ENCODE measurements at regions of chr17 and their contacts with region 1.

Region 1: GRCh38 chr17:46193626-46194392 is 580 bp upstream of the KANSL1 start:
- DNase-seq: peak; percentile 97 to 100
- ATAC-seq: peak; percentile 84 to 97
- H3K4me3 ChIP-seq: peak overlapping the region; percentile 65
- H3K27ac ChIP-seq: peak overlapping the region; percentile 90 to 97
- H3K4me1 ChIP-seq: peaks cover 49% of the 10 kb centered on the region
- CTCF ChIP-seq: peak; percentile 80
- EP300 ChIP-seq: no peak
- POLR2A ChIP-seq: peak; percentile 88
- RAD21 ChIP-seq: peak in 1 of 2 experiments; percentile 20; a peak in 2 of 5 replicates

Region 2: GRCh38 chr17:45907750-45908395 is 285.9 kb before region 1 on chr17:
- CTCF ChIA-PET with region 1: no interaction called
- POLR2A ChIA-PET with region 1: no interaction called
- DNase-seq: no peak
- ATAC-seq: no peak
- H3K4me3 ChIP-seq: no peak overlapping the region
- H3K27ac ChIP-seq: no peak overlapping the region
- H3K4me1 ChIP-seq: 0 out of 3 replicates have a peak, but pooled peaks cover 4% of the 10 kb centered on the region
- CTCF ChIP-seq: no peak
- EP300 ChIP-seq: no peak
- POLR2A ChIP-seq: no peak
- RAD21 ChIP-seq: no peak

Region 3: GRCh38 chr17:45934044-45934979 is 259.5 kb before region 1 on chr17:
- CTCF ChIA-PET with region 1: no interaction called
- POLR2A ChIA-PET with region 1: no interaction called
- DNase-seq: no peak
- ATAC-seq: no peak; a peak in 1 of 6 replicates
- H3K4me3 ChIP-seq: no peak overlapping the region
- H3K27ac ChIP-seq: no peak overlapping the region
- H3K4me1 ChIP-seq: peaks cover 9% of the 10 kb centered on the region; the same call in 1 of the 3 replicates
- CTCF ChIP-seq: no peak
- EP300 ChIP-seq: no peak
- POLR2A ChIP-seq: no peak
- RAD21 ChIP-seq: no peak

Region 4: DNA sequence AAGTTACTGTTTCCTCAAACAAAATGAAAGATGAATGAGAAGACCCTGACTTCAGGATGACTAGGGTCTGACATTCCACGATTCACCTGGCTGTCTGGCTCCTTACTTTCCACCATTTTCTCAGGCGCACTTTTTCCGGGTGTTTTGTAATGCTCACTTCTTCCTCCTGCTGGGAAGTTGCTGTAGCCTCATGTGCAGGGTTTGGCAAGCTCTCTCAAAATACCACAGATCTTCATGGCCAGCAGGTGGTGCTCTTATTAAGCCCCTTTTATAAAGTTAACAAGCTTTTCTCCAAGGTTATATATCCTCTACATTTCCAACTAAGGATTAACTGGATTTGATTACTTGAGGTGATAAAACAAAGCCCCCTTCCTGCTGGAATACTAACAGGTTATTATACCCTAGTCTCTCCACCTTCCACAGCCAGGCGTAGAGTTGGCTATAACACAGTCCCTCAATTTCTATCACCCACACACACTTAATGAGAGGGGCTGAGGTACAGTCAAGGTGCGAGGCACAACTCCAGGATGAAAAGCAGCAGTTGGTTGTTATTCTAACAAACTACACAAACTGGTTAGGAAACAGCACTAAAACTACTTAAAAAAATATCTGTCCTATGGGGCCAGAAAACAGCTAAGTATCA is 149.4 kb before region 1 on chr17:
- CTCF ChIA-PET with region 1: interaction called, 83 read pairs
- POLR2A ChIA-PET with region 1: interaction called, 23 read pairs
- DNase-seq: peak; percentile 81 to 93
- ATAC-seq: peak; percentile 91 to 96
- H3K4me3 ChIP-seq: no peak overlapping the region
- H3K27ac ChIP-seq: peak overlapping the region; percentile 7 to 45; a peak in 3 of 6 replicates
- H3K4me1 ChIP-seq: peaks cover 23% of the 10 kb centered on the region
- CTCF ChIP-seq: peak; percentile 99
- EP300 ChIP-seq: no peak
- POLR2A ChIP-seq: no peak
- RAD21 ChIP-seq: peak; percentile 89 to 91

Region 5: DNA sequence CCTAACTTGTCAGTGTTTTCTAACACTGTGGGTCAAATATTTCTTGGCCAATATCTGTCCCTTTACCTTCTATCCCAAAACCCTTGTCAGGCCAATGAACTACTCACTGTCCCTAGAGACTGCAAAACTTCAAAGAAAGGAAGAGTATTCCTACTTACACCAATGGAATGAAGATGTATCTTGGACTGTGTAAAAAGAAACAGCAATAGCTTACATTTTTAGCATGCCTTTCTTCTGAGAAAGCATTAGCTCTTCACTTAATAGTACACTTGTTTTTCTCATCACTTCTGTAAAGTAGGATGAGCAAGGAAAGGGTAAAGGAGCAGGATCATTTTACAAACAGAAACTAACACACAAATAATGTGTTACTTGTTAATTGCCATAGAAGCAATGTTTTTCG is 120.8 kb before region 1 on chr17:
- CTCF ChIA-PET with region 1: interaction called, 21 read pairs
- POLR2A ChIA-PET with region 1: interaction called, 5 read pairs
- DNase-seq: peak; percentile 23 to 46
- ATAC-seq: peak; percentile 74 to 86; a peak in 5 of 6 replicates
- H3K4me3 ChIP-seq: no peak overlapping the region; the same call in 2 of the 3 replicates
- H3K27ac ChIP-seq: peak overlapping the region; percentile 44 to 59; a peak in 2 of 6 replicates
- H3K4me1 ChIP-seq: peaks cover 49% of the 10 kb centered on the region
- CTCF ChIP-seq: no peak
- EP300 ChIP-seq: no peak
- POLR2A ChIP-seq: no peak
- RAD21 ChIP-seq: no peak

Region 6: DNA sequence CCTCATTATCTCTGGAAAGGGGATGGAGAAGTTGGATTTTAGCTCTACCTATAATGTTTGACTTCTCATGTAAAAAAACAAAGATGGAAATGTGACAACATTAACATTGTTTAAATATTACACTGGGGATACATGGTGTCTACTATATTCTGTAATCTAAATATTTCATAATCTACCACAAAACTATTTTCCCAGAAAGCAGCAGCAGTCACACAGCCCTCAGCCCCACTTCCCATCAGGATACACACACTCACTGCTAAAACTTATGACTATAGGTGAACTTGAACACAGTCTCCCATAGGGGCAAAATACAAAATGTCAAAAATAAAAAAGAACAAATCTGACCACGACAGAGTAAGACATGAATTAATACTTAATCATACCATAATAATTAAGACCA is 96.3 kb before region 1 on chr17:
- CTCF ChIA-PET with region 1: interaction called, 27 read pairs
- POLR2A ChIA-PET with region 1: interaction called, 13 read pairs
- DNase-seq: no peak
- ATAC-seq: peak in 1 of 2 experiments; percentile 12; a peak in 2 of 6 replicates
- H3K4me3 ChIP-seq: no peak overlapping the region
- H3K27ac ChIP-seq: no peak overlapping the region
- H3K4me1 ChIP-seq: peaks cover 72% of the 10 kb centered on the region
- CTCF ChIP-seq: no peak
- EP300 ChIP-seq: no peak
- POLR2A ChIP-seq: no peak
- RAD21 ChIP-seq: no peak

Region 7: GRCh38 chr17:46144246-46144645 is 49.6 kb before region 1 on chr17:
- CTCF ChIA-PET with region 1: interaction called, 25 read pairs
- POLR2A ChIA-PET with region 1: interaction called, 6 read pairs
- DNase-seq: no peak
- ATAC-seq: no peak
- H3K4me3 ChIP-seq: no peak overlapping the region
- H3K27ac ChIP-seq: no peak overlapping the region
- H3K4me1 ChIP-seq: peaks cover 59% of the 10 kb centered on the region
- CTCF ChIP-seq: no peak
- EP300 ChIP-seq: no peak
- POLR2A ChIP-seq: no peak
- RAD21 ChIP-seq: no peak

Region 8: GRCh38 chr17:46179375-46179999 is 14.3 kb before region 1 on chr17:
- CTCF ChIA-PET with region 1: interaction called, 205 read pairs
- POLR2A ChIA-PET with region 1: interaction called, 15 read pairs
- DNase-seq: no peak
- ATAC-seq: no peak
- H3K4me3 ChIP-seq: no peak overlapping the region
- H3K27ac ChIP-seq: no peak overlapping the region
- H3K4me1 ChIP-seq: peaks cover 66% of the 10 kb centered on the region
- CTCF ChIP-seq: no peak
- EP300 ChIP-seq: no peak
- POLR2A ChIP-seq: no peak
- RAD21 ChIP-seq: no peak